Sigmoid colon (tissue), 7 donors: ENCODE measurements at regions of chr16 and their contacts with region 1.

Region 1: GRCh38 chr16:720990-721764 is at the start of gene ANTKMT:
- DNase-seq: peak; percentile 86
- H3K4me3 ChIP-seq: peak within 1 kb of the TSS; percentile 58 to 71 (median 64)
- H3K27ac ChIP-seq: peak within 1 kb of the TSS; percentile 85 to 93 (median 89)
- H3K4me1 ChIP-seq: peaks cover 0 to 40% (median 31%) of the 10 kb centered on the region in 4 donors
- H3K27me3 ChIP-seq: peaks cover 5 to 19% (median 7%) of the 10 kb centered on the region in 3 donors
- CTCF ChIP-seq: no peak
- EP300 ChIP-seq: no peak
- POLR2A ChIP-seq: no peak
- total RNA-seq, gene ANTKMT: 27.1 to 53.1 (median 39.5) TPM

Region 2: GRCh38 chr16:740764-741505 is 19.8 kb after region 1 on chr16 and contains the start of gene CIAO3:
- intact Hi-C with region 1: loop called (anchors 2 kb)
- DNase-seq: peak; percentile 94
- H3K4me3 ChIP-seq: peak within 1 kb of the TSS; percentile 79 to 92 (median 88)
- H3K27ac ChIP-seq: peak within 1 kb of the TSS; percentile 69 to 75 (median 72)
- H3K4me1 ChIP-seq: peaks cover 0 to 18% (median 15%) of the 10 kb centered on the region in 4 donors
- H3K27me3 ChIP-seq: peaks cover 0 to 5% (median 0%) of the 10 kb centered on the region in 3 donors
- CTCF ChIP-seq: peak; percentile 62 to 97 (median 72)
- EP300 ChIP-seq: no peak
- POLR2A ChIP-seq: peak; percentile 16 to 58
- total RNA-seq, gene CIAO3: 18.9 to 28.5 (median 23.8) TPM